ENCODE measurements at regions of chr17 and their contacts with region 1.

Region 1: DNA sequence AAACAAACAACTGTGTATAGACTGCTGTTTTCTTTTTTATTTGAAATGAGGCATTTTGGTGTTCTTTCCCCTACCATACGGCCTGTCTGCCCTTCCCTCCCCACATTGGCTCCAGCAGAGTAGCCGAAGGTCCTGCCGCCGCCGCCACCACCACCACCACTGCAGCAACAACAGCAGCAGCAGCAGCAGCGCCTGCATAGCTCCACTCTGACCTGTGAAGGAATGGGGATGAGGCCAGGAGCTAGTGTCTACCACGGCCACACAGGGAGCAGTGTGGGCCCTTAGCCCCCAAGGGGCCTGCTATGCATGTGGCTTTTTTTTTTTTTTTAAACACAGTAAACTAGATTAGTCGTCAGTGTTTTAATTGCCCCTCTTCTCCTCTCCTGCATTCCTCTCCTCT is 5.6 kb upstream of the CDK5R1 start:
- DNase-seq: no peak
- H3K4me3 ChIP-seq: no peak overlapping the region
- H3K4me3 Mint-ChIP-seq: no peak overlapping the region
- H3K27ac Mint-ChIP-seq: no peak overlapping the region
- H3K4me1 ChIP-seq: peaks cover 10% of the 10 kb centered on the region
- H3K4me1 Mint-ChIP-seq: peaks cover 12% of the 10 kb centered on the region
- H3K27me3 ChIP-seq: no peaks in the 10 kb centered on the region
- H3K27me3 Mint-ChIP-seq: no peaks in the 10 kb centered on the region
- CTCF ChIP-seq: no peak

Region 2: GRCh38 chr17:31388770-31389661 is 1092.2 kb before region 1 on chr17:
- CTCF ChIA-PET with region 1: interaction called, 12 read pairs
- POLR2A ChIA-PET with region 1: no interaction called
- intact Hi-C with region 1: no loop called
- DNase-seq: peak in 1 of 2 experiments; percentile 63
- H3K4me3 ChIP-seq: no peak overlapping the region
- H3K4me3 Mint-ChIP-seq: no peak overlapping the region
- H3K27ac Mint-ChIP-seq: no peak overlapping the region
- H3K4me1 ChIP-seq: no peaks in the 10 kb centered on the region
- H3K4me1 Mint-ChIP-seq: no peaks in the 10 kb centered on the region
- H3K27me3 ChIP-seq: peaks cover 2% of the 10 kb centered on the region
- H3K27me3 Mint-ChIP-seq: peaks cover 12% of the 10 kb centered on the region
- CTCF ChIP-seq: peak; percentile 87 to 93

Region 3: DNA sequence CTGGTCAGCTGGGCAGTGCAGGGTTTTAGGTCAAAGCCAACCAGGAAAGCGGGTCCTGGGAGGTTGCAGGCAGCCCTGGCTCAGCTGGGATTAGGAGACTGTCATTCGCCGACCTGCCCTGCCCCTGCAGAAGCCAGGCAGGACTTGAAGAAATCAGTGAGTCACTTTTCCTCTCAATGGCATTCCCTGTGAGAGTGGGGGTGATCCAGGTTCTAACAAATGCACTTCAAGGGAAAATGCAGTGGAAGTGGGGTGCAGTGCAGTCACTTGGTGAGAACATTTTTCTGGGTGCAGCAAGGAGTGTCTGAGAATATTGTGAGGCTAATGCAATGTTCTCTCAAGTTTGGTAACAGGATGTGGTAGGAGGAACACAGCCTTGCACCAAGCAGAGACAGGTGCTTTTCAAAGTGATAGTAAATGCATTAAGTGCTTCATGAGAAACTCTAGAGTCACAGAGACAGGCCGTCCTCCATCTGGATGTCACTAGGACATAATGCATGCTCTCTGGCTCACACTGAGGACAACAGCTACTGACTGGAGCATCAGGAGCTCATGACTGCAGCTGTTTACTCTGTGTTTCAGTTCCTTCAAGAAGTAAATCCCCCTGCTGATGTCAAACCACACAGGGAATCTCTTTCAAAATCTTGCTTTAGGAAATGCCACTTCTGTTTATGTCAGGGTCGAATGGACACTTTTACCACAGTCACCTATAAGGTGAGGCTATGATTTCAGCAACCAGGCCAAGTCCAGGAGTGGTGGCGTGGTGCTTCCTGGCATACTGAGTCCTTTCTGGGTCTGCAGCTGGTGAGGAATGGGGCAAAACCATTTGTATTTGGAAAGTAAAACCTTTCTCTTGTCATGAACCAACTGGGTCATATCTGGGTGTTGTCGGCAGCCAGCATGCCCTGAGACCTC is 22.3 kb after region 1 on chr17:
- CTCF ChIA-PET with region 1: no interaction called
- POLR2A ChIA-PET with region 1: no interaction called
- intact Hi-C with region 1: no loop called
- DNase-seq: no peak
- H3K4me3 ChIP-seq: no peak overlapping the region
- H3K4me3 Mint-ChIP-seq: no peak overlapping the region
- H3K27ac Mint-ChIP-seq: no peak overlapping the region
- H3K4me1 ChIP-seq: no peaks in the 10 kb centered on the region
- H3K4me1 Mint-ChIP-seq: no peaks in the 10 kb centered on the region
- H3K27me3 ChIP-seq: no peaks in the 10 kb centered on the region
- H3K27me3 Mint-ChIP-seq: no peaks in the 10 kb centered on the region
- CTCF ChIP-seq: no peak

Region 4: DNA sequence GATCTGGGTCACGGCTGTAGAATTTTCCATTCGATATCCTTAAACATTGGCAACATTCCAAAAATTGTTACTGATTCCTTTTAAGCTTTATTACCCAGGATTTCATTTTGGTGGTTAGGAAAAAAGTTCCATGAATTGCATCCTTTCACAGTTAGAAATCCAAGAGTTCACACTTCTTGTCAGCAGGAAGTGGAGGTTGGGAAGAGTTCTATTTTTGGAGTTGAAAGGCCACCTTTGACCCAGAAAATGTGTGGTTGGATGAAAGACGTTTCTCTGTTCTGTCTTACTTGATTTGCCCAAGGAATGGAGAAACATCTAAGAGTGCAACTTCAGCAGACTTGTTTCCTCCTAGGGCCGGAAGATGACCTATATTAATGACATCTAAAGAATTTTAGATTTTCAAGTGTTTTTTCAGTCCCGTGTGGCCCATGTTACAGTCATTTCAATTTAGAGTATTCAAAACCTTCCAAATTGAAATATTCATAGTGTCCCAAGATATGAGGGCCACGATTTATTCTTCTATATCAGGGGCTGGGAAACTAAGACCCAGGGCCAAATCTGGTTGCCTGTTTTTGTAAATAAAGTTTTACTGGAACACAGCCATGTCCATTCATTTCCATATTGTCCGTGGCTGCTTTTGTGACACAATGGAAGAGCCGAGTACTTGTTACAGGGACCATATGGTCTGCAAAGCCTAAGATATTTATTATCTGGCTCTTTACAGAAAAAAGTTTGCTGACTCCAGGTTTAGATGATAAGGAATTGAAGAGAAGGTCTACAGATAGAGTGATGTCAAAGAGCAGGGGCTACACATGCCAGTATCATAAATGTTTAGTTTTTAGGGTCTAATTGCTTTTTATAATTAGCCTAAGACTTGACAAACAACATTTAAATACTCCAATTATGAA is 55.8 kb after region 1 on chr17:
- CTCF ChIA-PET with region 1: no interaction called
- POLR2A ChIA-PET with region 1: no interaction called
- intact Hi-C with region 1: no loop called
- DNase-seq: no peak
- H3K4me3 ChIP-seq: no peak overlapping the region
- H3K4me3 Mint-ChIP-seq: no peak overlapping the region
- H3K27ac Mint-ChIP-seq: no peak overlapping the region
- H3K4me1 ChIP-seq: no peaks in the 10 kb centered on the region
- H3K4me1 Mint-ChIP-seq: peaks cover 6% of the 10 kb centered on the region
- H3K27me3 ChIP-seq: no peaks in the 10 kb centered on the region
- H3K27me3 Mint-ChIP-seq: no peaks in the 10 kb centered on the region
- CTCF ChIP-seq: no peak

Region 5: DNA sequence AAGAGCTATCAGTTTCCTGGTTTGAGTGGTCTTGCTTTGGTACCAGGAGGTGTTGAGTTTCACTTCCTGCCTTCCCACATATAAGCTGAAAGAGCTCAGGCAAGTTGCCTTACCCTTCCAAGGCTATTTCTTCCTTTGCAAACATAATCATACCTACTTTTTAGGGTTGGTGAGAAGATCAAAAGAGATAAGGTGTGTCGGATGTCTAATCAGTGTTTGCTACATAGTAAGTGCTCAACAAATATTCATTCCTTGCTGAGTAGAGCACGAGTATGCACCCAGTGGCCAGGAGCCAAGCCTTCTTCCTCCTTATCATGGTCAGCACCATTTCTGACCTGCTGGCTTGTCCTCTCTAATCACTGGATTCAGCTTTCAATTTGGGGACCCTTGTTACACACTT is 434.1 kb after region 1 on chr17:
- CTCF ChIA-PET with region 1: no interaction called
- POLR2A ChIA-PET with region 1: no interaction called
- intact Hi-C with region 1: no loop called
- DNase-seq: no peak
- H3K4me3 ChIP-seq: no peak overlapping the region
- H3K4me3 Mint-ChIP-seq: no peak overlapping the region
- H3K27ac Mint-ChIP-seq: no peak overlapping the region
- H3K4me1 ChIP-seq: peaks cover 25% of the 10 kb centered on the region
- H3K4me1 Mint-ChIP-seq: peaks cover 7% of the 10 kb centered on the region
- H3K27me3 ChIP-seq: no peaks in the 10 kb centered on the region
- H3K27me3 Mint-ChIP-seq: no peaks in the 10 kb centered on the region
- CTCF ChIP-seq: no peak